Activated naive CD4-positive, alpha-beta T cell treated with anti-CD3 and anti-CD28 coated beads for 36 hours (primary cell): ENCODE measurements at regions of chr22 and their contacts with region 1.

Region 1: DNA sequence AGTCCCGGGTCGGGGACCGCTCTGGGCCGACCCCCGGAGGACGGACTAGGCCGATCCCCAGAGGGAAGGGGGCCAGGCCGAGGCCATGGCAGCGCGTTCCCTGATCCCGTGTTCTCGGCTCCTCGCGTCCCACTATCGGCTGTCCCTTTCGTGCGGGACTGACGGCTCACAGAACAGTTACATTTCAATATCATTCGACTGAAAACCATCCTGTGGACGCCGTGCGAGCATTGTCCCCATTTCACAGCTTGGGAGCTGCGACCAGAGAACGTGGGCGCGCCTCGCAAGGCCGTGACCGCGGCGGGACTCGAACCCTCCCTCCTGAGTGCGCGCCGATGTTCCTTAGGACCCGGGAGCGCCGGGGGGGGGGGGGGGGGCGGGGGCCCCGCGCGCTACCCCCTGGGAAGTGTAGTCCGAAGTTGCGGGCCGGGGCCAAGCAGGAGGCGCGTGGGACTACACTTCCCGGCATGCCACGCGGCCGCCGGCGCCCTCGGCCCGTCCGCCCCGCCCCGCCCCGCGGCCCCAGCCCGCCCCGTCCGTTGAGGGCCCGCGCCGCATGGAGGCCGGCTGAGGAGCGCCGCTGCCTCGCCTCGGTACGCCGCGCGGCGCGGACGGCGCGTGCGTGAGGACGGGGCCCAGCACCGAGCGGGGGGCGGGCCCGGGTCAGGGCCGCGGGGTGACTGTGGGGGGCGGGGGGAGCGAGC is at the start of gene TRABD:
- DNase-seq: peak; percentile 90
- H3K4me3 Mint-ChIP-seq: peak within 1 kb of the TSS; percentile 93
- H3K27ac Mint-ChIP-seq: peak within 1 kb of the TSS; percentile 87
- H3K4me1 Mint-ChIP-seq: peaks cover 33% of the 10 kb centered on the region
- H3K27me3 Mint-ChIP-seq: no peaks in the 10 kb centered on the region
- total RNA-seq, gene TRABD: 61.0 to 62.8 TPM

Region 2: DNA sequence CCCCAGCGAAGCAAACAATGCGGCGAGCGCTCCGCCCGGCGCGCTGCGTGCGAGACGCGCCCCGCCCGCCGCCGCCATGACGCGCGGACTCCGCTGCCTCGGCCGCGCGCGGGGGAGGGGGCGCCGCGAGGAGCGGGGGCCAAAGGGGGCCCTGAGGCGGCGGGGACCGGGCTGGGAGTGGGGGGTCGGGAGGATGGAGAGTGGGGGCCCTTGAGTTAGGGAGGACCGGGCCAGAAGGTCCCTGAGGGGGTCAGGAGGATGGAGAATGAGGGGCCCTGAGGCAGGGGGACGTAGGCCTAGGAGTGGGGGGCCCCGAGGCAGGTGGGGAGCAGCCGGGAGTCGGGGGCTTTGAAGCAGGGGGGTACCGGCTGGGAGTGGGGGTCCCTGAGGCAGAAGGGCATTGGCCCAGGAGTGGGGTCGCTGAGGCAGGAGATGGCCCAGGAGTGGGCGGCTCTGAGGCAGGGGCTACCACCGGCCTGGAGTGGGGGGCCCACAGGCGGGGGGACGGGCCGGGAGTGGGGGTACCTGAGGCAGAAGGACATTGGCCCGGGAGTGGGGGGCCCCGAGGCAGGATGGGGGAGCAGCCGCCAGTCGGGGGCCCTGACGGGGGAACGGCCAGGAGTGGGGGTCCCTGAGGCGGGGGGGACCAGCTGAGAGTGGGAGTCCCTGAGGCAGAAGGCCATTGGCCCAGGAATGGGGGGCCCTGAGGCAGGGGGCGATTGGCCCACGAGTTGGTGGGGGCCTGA is 357.5 kb before region 1 on chr22 and contains the start of gene BRD1:
- CTCF ChIA-PET with region 1: no interaction called
- intact Hi-C with region 1: loop called (anchors 5 kb)
- DNase-seq: peak; percentile 35
- H3K4me3 Mint-ChIP-seq: peak within 1 kb of the TSS; percentile 85
- H3K27ac Mint-ChIP-seq: peak within 1 kb of the TSS; percentile 91
- H3K4me1 Mint-ChIP-seq: peaks cover 53% of the 10 kb centered on the region
- H3K27me3 Mint-ChIP-seq: no peaks in the 10 kb centered on the region
- total RNA-seq, gene BRD1: 26.0 to 27.0 TPM

Region 3: GRCh38 chr22:49936018-49936952 is 249.3 kb before region 1 on chr22:
- CTCF ChIA-PET with region 1: no interaction called
- intact Hi-C with region 1: loop called (anchors 2 kb)
- DNase-seq: peak; percentile 99
- H3K4me3 Mint-ChIP-seq: peak overlapping the region; percentile 57
- H3K27ac Mint-ChIP-seq: peak overlapping the region; percentile 90
- H3K4me1 Mint-ChIP-seq: peaks cover 33% of the 10 kb centered on the region
- H3K27me3 Mint-ChIP-seq: no peaks in the 10 kb centered on the region

Region 4: GRCh38 chr22:49960159-49961004 is 225.2 kb before region 1 on chr22 and contains the start of gene PIM3:
- CTCF ChIA-PET with region 1: no interaction called
- intact Hi-C with region 1: loop called (anchors 5 kb)
- DNase-seq: peak; percentile 94
- H3K4me3 Mint-ChIP-seq: peak within 1 kb of the TSS; percentile 91
- H3K27ac Mint-ChIP-seq: peak within 1 kb of the TSS; percentile 94
- H3K4me1 Mint-ChIP-seq: peaks cover 23% of the 10 kb centered on the region
- H3K27me3 Mint-ChIP-seq: no peaks in the 10 kb centered on the region
- total RNA-seq, gene PIM3: 202 to 210 TPM

Region 5: DNA sequence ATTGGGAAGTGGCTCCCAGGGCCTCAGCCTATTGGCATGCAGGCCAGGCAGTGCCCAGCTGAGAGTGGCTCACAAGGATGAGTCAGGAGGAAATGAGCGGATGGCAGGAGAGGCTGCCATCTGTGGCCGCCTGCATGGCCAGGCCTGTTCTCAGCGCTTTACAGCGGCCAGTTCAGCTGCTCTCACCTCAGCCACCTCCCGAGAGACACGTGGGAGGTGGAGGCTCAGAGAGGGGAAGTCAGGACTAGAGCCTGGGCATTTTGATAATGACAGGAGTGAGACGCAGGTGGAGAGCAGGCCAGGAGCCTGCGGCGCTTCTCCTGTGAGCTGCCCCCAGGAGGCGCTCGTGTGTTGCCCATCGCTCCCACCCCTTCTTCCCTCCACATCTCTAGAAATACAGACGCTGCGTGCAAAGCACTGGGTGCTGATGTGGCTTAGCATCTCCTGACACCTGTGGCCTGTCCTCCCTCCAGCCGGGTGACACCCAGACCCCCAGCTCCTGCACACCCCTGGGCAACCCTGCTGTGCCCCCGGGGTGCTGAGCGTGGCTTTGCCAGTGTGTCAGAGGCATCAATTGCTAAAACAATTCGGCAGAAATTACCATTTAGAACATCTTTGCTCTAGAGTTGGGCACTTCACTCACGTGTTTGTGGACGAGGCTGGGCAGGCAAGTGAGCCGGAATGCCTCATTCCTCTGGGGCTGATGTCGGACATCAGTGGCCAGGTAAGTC is 36.4 kb before region 1 on chr22:
- CTCF ChIA-PET with region 1: interaction called, 15 read pairs
- intact Hi-C with region 1: loop called (anchors 1 kb)
- DNase-seq: peak; percentile 76
- H3K4me3 Mint-ChIP-seq: no peak overlapping the region
- H3K27ac Mint-ChIP-seq: no peak overlapping the region
- H3K4me1 Mint-ChIP-seq: no peaks in the 10 kb centered on the region
- H3K27me3 Mint-ChIP-seq: no peaks in the 10 kb centered on the region

Region 6: GRCh38 chr22:50200461-50201190 is 15.1 kb after region 1 on chr22 and contains the start of gene SELENOO:
- CTCF ChIA-PET with region 1: interaction called, 8 read pairs
- intact Hi-C with region 1: loop called (anchors 2 kb)
- DNase-seq: peak; percentile 92
- H3K4me3 Mint-ChIP-seq: peak within 1 kb of the TSS; percentile 77
- H3K27ac Mint-ChIP-seq: no peak within 1 kb of the TSS
- H3K4me1 Mint-ChIP-seq: peaks cover 22% of the 10 kb centered on the region
- H3K27me3 Mint-ChIP-seq: no peaks in the 10 kb centered on the region
- total RNA-seq, gene SELENOO: 16.5 to 16.7 TPM

Region 7: DNA sequence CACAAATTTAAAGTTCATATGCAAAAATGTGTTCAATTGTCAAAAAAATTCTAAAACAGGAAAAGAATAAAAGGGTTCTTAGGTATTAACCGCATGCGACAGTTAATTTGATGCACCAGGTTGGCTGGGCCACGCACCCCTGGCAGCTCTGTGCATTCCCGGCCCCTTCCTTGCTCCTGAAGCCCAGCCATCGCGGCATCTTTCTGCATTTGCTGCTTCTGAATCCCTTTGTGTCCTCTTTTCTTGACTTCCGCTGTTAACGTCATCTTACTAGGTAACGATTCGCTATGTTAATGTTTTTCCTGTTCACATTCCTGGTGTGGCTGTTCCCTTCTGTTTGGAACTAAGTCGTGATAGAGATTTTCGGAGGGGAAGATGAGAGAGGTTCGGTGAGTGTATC is 352.2 kb after region 1 on chr22:
- CTCF ChIA-PET with region 1: no interaction called
- intact Hi-C with region 1: loop called (anchors 5 kb)
- DNase-seq: no peak
- H3K4me3 Mint-ChIP-seq: no peak overlapping the region
- H3K27ac Mint-ChIP-seq: peak overlapping the region; percentile 98
- H3K4me1 Mint-ChIP-seq: peaks cover 77% of the 10 kb centered on the region
- H3K27me3 Mint-ChIP-seq: no peaks in the 10 kb centered on the region